Naive thymus-derived CD8-positive, alpha-beta T cell (primary cell): ENCODE measurements at regions of chr1 and their contacts with region 1.

Region 1: DNA sequence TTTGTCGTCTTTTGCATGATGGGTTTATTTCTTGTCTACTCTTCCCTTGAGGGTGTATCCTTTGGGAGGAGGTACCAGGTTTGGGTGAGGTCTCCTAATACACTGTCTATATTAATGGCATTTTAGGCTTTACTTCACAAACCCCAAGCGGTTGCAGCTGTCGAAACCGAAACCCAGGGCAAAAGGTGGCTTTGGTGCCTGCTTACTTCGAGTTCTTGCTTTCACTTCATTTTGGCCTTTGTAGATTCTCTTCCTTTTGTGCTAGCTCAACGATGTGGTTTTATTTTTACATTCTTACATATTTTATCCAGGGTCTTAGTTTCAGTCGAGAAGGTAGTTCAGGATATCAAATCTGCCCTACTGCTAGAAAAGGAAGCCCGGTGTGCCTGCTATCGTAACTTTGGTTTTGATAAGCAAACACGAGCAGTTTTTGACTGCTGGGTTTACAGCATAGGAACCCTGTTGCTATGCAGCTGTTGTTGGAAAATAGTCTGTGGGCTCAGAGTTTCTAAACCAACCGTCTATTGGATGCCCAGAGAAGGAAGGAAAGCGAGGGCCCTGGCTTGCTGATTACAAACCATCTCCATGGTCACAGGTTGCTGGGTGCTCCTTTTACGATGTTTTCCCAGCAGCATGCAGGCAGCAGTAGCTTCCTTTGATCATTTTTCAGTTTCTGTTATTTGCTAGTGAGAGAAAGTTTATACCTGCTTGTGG is 9.8 kb upstream of the TSPAN2 start:
- DNase-seq: peak; percentile 48 to 96 (median 84)
- ATAC-seq: peak; percentile 81 to 90
- H3K4me3 Mint-ChIP-seq: peak overlapping the region; percentile 83 to 99 (median 92)
- H3K27ac Mint-ChIP-seq: peak overlapping the region; percentile 96 to 100 (median 99)
- H3K4me1 Mint-ChIP-seq: peaks cover 14 to 49% (median 34%) of the 10 kb centered on the region in 4 donors
- H3K27me3 Mint-ChIP-seq: no peaks in the 10 kb centered on the region

Region 2: GRCh38 chr1:115063228-115063901 is 35.8 kb before region 1 on chr1:
- POLR2A ChIA-PET with region 1: interaction called, 12 read pairs
- DNase-seq: peak in 9 of 10 donors; percentile 8 to 85 (median 61)
- ATAC-seq: peak; percentile 65 to 72
- H3K4me3 Mint-ChIP-seq: peak overlapping the region; percentile 46 to 88 (median 76)
- H3K27ac Mint-ChIP-seq: peak overlapping the region; percentile 89 to 100 (median 98)
- H3K4me1 Mint-ChIP-seq: peaks cover 16 to 57% (median 45%) of the 10 kb centered on the region in 4 donors
- H3K27me3 Mint-ChIP-seq: no peaks in the 10 kb centered on the region

Region 3: GRCh38 chr1:115275212-115275611 is 176.1 kb after region 1 on chr1:
- POLR2A ChIA-PET with region 1: no interaction called
- DNase-seq: no peak
- ATAC-seq: no peak
- H3K4me3 Mint-ChIP-seq: no peak overlapping the region
- H3K27ac Mint-ChIP-seq: no peak overlapping the region
- H3K4me1 Mint-ChIP-seq: no peaks in the 10 kb centered on the region
- H3K27me3 Mint-ChIP-seq: peaks cover 2 to 25% (median 8%) of the 10 kb centered on the region in 5 donors

Region 4: DNA sequence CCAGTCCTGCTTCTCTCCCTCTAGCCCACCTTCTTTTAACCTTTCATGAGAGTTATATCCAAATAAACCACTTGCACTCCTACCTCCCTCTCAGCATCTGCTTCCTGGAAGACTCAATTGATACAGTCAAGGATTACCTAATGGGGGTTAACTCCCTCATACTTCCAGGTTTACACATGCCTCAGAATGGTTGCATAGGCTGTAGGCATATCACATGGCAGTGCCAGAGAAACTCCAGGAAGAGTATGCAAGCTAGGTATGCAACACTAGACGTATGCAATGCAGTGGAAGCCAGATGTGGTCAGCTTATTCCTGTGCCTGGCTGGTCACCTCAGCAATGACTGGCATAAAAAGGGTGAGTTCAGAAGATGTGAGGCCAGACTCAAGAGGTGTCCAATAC is 509.9 kb after region 1 on chr1:
- POLR2A ChIA-PET with region 1: no interaction called
- DNase-seq: no peak
- ATAC-seq: no peak
- H3K4me3 Mint-ChIP-seq: no peak overlapping the region
- H3K27ac Mint-ChIP-seq: no peak overlapping the region
- H3K4me1 Mint-ChIP-seq: no peaks in the 10 kb centered on the region
- H3K27me3 Mint-ChIP-seq: peaks cover 2 to 20% (median 17%) of the 10 kb centered on the region in 5 donors